ENCODE measurements at regions of chr14 and their contacts with region 1.

Region 1: DNA sequence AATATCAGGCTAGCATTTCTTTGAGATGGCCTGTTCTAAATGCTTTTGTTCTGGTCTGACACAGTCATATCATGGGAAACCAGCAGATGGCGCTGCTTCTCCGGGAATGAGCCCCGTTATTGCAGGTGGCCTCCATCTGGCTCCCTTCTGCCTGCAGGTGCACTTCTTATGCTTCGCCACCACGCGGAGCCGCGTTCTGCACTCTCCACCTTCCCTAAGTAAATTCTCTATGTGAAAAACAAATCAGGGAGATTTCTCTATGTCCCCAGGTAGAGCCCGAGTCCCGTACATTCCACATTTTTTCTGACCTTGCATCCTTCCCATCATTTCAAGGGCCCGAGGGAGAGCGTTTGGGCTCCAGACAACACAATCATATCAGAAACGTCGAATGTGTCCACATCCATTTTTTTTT is 26.2 kb downstream of the GLRX5 start:
- DNase-seq: peak; percentile 88 to 93 (median 93)
- H3K4me3 ChIP-seq: no peak overlapping the region
- H3K27ac ChIP-seq: no peak overlapping the region
- H3K4me1 ChIP-seq: peaks cover 4% of the 10 kb centered on the region
- H3K27me3 ChIP-seq: no peaks in the 10 kb centered on the region
- CTCF ChIP-seq: peak; percentile 92 to 97 (median 97)
- EP300 ChIP-seq: no peak
- POLR2A ChIP-seq: no peak

Region 2: DNA sequence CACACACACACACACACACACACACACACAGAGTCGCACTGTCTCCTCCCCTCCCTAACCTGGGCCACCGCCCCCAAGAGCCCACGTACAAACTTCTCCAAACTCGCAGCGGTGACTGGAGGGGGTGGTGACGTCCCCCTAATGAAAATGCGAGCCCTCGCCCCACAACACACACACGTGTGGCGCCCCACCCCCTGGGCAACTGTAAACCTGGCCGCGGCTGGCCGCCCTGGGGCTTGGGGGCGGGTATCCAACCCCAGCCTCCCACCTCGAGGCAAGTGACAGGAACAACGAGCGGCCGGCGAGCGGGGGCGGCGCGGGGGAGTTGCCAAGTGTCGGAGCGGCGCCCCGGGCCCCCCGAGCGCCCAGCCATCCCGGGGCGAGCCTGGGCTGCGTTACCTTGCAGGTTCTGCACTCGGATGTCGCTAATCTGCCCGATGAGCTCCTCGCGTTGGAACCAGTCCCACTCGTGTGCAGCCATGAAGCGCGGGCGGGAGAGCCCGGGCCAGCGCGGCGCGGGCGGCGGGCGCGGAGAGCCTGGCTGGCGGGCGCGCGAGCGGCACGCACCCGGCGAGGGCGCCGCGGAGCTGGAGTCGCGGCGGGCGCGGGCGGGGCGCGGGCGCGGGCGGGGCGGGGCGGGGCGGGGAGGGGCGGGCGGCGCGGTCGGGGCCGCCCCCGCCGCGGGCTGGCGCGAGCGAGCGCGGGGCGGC is 241.5 kb before region 1 on chr14 and contains the start of gene CLMN:
- intact Hi-C with region 1: no loop called
- DNase-seq: peak; percentile 39 to 66 (median 55)
- H3K4me3 ChIP-seq: peak within 1 kb of the TSS; percentile 88
- H3K27ac ChIP-seq: peak within 1 kb of the TSS; percentile 16 to 57
- H3K4me1 ChIP-seq: no peaks in the 10 kb centered on the region
- H3K27me3 ChIP-seq: no peaks in the 10 kb centered on the region
- CTCF ChIP-seq: no peak
- EP300 ChIP-seq: no peak
- POLR2A ChIP-seq: no peak
- total RNA-seq, gene CLMN: 4.4 to 11.7 (median 6.5) TPM

Region 3: DNA sequence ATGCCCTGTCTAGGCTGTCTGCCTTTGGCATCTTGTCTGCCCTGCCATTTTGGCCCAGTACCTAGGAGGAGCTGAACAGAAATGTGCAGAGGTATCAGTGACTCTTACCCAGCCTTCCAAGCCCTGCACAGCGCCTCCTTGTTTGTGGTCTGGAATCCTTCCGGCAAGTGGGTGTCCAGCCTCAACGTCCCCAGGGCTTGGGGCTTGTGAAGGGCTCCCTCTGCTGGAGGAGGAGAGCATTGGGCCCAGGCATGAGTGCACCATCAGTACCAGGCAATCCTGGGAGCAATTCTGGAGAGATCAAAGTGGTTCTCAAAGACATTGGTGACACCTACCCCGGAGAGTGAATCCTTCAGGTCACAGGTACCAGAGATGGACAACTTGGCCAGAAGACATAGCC is 122.8 kb after region 1 on chr14:
- intact Hi-C with region 1: loop called in 1 of 4 experiments (anchors 5 kb)
- DNase-seq: no peak
- H3K4me3 ChIP-seq: no peak overlapping the region
- H3K27ac ChIP-seq: no peak overlapping the region
- H3K4me1 ChIP-seq: no peaks in the 10 kb centered on the region
- H3K27me3 ChIP-seq: no peaks in the 10 kb centered on the region
- CTCF ChIP-seq: no peak
- EP300 ChIP-seq: no peak
- POLR2A ChIP-seq: no peak

Region 4: DNA sequence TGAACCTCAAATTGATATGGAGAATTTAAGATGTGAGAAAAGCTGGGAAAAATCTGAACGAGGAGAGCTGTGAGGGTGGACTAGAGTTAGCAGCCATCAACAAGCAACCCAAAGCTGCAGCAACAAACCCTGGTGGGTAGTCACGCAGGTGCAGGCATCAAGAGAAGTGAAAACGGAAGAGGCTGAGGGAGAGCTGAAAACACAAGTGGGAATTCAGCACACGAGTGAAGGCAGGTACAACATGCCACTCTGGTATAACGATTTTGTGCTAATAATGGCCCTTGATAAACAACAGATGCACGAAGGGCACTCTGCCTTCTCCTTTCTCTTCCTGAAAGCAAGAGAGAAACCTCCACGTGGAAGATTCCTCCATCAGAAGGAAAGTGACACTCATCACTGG is 136.8 kb after region 1 on chr14:
- intact Hi-C with region 1: loop called in 1 of 4 experiments (anchors 10 kb)
- DNase-seq: no peak
- H3K4me3 ChIP-seq: no peak overlapping the region
- H3K27ac ChIP-seq: no peak overlapping the region
- H3K4me1 ChIP-seq: no peaks in the 10 kb centered on the region
- H3K27me3 ChIP-seq: no peaks in the 10 kb centered on the region
- CTCF ChIP-seq: no peak
- EP300 ChIP-seq: no peak
- POLR2A ChIP-seq: no peak

Region 5: DNA sequence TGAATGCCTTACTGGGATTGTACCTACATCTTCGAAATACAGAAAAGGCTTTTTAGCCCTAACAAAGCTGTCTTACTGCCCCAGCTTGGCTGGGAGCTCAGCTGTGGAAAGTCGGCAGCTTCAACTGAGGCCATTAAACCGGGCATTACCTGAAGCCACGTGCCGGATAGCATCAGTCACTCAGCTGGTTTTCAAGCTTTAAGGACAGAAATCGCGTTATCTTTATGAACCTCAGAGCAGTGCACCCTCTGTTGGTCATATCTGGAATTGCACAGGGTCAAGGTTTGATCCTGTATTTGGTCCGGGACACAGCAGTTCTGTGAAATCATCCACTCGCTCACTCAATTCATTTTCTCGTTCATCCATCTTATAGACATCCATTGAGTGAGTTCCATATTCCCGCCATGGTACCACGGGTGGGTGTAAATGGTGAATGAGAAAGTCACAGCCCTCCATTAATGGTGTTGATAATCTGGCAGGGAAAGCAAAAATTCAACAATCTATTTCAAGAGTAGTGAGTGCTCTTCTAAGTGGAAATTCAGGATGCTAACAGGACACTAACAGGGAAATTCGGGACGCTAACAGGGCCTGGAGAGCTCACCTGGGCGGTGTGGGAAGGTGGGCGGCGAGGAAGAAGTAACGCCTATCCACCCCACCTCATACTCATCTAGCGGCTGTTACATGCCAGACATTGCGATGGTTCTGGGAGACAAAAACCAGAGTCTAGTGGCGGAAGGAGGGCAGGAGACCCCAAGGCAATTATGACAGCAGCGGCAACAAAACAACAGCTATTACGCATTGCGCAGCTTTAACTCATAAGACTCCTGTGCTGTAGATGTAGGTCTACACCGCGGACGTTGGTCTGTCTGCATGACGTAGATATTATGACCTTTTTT is 213.5 kb after region 1 on chr14:
- intact Hi-C with region 1: loop called in 2 of 4 experiments (anchors 5 to 10 kb)
- DNase-seq: peak in 4 of 5 donors; percentile 12 to 45 (median 26)
- H3K4me3 ChIP-seq: no peak overlapping the region
- H3K27ac ChIP-seq: no peak overlapping the region
- H3K4me1 ChIP-seq: no peaks in the 10 kb centered on the region
- H3K27me3 ChIP-seq: no peaks in the 10 kb centered on the region
- CTCF ChIP-seq: peak; percentile 25 to 36 (median 34)
- EP300 ChIP-seq: no peak
- POLR2A ChIP-seq: no peak

Region 6: DNA sequence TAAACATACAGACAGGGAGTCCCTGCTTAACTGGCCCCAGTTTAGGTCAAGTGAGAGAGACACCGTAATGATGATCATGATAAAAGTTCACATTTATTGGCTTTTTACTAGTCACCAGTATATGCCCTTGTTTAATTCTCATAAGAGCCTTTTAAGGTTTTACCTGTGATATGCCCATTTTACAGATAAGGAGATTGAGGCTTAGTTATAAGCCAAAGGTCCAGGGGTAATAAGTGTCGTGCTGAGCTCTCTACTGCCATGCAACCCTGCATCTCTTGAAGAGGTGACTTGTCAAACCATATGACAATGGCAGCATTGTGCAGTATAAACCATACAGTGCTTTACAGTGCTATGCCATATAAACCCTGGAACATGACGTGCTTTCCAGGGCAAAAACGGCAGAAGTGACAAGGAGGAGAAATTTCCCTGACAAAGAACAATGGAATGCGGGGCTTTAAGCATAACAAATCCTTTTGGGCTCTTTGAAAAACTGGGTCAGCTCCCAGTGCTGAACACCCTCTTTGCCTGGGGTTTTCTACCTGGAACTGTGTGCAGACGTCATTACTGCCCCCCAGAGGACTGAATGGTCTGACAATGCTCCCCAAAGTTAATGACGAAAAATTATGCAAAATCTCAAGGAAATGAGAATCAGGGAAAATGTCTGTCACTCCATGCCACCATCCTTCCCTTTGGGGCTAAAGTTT is 418.5 kb after region 1 on chr14:
- intact Hi-C with region 1: loop called in 1 of 4 experiments (anchors 10 kb)
- DNase-seq: no peak
- H3K4me3 ChIP-seq: no peak overlapping the region
- H3K27ac ChIP-seq: no peak overlapping the region
- H3K4me1 ChIP-seq: no peaks in the 10 kb centered on the region
- H3K27me3 ChIP-seq: no peaks in the 10 kb centered on the region
- CTCF ChIP-seq: no peak
- EP300 ChIP-seq: no peak
- POLR2A ChIP-seq: no peak

Region 7: DNA sequence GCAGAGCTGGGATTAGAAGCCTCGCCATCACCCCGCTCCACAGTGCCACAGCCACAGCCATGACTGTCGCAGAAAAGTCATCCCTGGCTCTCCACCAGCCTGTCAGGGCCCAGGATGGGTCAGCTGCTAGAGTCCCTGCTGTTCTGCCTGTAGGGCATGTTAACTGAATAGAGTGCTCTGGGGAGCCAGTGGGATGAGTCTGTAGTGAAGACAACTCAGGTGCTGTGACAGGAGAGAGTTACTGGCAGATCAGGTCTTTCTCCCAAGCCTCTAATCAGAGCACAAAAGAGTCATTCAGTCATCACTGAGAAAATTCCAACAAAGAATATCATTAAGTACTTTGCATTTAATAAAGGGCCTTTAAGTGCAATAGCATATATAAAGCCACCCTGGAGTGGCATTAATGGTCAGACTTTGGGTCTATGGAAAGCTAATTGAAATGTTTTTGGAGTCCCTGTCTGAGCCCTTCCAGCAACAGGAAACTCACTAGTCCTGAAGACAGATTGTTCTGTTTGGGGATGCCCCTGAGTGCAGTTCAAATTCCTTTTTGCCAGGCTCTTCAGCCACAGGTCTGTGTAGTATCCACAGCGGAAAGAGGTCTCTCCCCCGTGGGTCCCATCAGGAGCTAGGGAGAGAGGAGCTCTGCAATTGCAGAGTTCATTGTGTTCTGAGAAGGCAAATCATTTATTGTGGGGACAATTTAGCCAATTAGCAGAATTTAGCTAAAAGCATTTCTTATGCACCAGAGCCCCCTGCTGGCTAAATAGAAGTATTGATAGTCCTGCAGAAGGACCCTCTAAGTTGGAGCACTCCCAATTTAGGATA is 433.0 kb after region 1 on chr14:
- intact Hi-C with region 1: loop called in 3 of 4 experiments (anchors 5 to 10 kb)
- DNase-seq: peak in 4 of 5 donors; percentile 11 to 37 (median 18)
- H3K4me3 ChIP-seq: no peak overlapping the region
- H3K27ac ChIP-seq: no peak overlapping the region
- H3K4me1 ChIP-seq: no peaks in the 10 kb centered on the region
- H3K27me3 ChIP-seq: no peaks in the 10 kb centered on the region
- CTCF ChIP-seq: peak in 2 of 3 donors; percentile 54 to 72
- EP300 ChIP-seq: no peak
- POLR2A ChIP-seq: no peak

Region 8: GRCh38 chr14:96275177-96276112 is 714.4 kb after region 1 on chr14:
- intact Hi-C with region 1: loop called in 2 of 4 experiments (anchors 10 kb)
- DNase-seq: peak; percentile 70 to 86 (median 79)
- H3K4me3 ChIP-seq: no peak overlapping the region
- H3K27ac ChIP-seq: no peak overlapping the region
- H3K4me1 ChIP-seq: no peaks in the 10 kb centered on the region
- H3K27me3 ChIP-seq: no peaks in the 10 kb centered on the region
- CTCF ChIP-seq: peak; percentile 56 to 70 (median 62)
- EP300 ChIP-seq: no peak
- POLR2A ChIP-seq: no peak